Body of pancreas (tissue), 4 donors: ENCODE measurements at regions of chr1 and their contacts with region 1.

Region 1: GRCh38 chr1:183323849-183324683 is 94.1 kb downstream of the NMNAT2 start:
- DNase-seq: no peak
- ATAC-seq: no peak
- H3K4me3 ChIP-seq: no peak overlapping the region
- H3K27ac ChIP-seq: no peak overlapping the region
- H3K4me1 ChIP-seq: no peaks in the 10 kb centered on the region
- H3K27me3 ChIP-seq: no peaks in the 10 kb centered on the region
- CTCF ChIP-seq: no peak
- POLR2A ChIP-seq: no peak

Region 2: DNA sequence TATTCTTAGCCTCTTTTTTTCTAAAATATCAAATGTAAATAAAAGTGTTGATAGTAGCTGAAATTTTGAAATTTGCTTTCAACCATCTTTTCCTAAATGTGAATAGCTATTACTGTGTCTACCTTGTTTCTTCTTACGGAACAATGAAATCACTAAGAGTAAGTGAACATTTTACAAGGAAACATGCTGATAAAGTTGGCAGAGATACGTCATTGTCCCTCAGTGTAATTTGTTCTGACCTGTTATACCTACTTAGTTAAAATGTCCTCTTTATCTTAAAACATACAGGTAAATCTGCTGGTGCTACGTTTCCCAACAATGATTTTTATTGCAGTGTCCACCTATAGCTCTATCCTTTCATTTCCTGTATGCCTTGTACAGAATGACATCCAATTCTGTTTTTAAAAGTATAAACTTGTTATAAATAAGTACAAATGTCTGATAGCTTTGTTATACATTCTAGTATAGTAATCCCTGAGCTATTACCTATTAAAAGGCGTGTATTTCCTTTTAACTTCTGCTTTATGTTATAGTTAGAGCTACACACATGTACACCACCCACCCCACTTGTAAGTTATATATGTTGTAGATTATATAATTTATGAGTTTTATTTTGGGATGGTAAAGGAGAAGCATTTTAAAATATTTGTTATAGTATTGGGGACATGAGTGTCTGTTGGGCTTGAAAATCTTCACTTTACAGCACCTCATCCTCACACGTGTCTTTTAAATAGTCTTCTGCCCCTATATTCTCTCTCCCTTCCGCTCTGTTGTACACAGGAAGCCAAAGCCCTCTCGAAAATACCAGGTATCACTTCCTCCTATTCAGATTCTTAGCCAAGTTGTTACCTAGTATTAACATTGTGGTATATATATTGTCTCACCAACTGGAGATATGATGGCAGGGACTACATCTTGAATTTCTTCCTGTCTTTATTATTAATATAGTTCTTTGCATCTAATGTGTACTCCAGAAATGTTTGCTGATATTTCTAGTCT is 275.7 kb before region 1 on chr1:
- intact Hi-C with region 1: no loop called
- DNase-seq: no peak
- ATAC-seq: no peak
- H3K4me3 ChIP-seq: no peak overlapping the region
- H3K27ac ChIP-seq: no peak overlapping the region
- H3K4me1 ChIP-seq: peaks cover 22% of the 10 kb centered on the region
- H3K27me3 ChIP-seq: no peaks in the 10 kb centered on the region
- CTCF ChIP-seq: no peak
- POLR2A ChIP-seq: no peak

Region 3: GRCh38 chr1:183244466-183244865 is 79.6 kb before region 1 on chr1:
- intact Hi-C with region 1: no loop called
- DNase-seq: peak; percentile 51 to 63 (median 55)
- ATAC-seq: peak; percentile 46
- H3K4me3 ChIP-seq: no peak overlapping the region
- H3K27ac ChIP-seq: peak overlapping the region in 1 of 4 donors; percentile 22
- H3K4me1 ChIP-seq: no peaks in the 10 kb centered on the region
- H3K27me3 ChIP-seq: no peaks in the 10 kb centered on the region
- CTCF ChIP-seq: no peak
- POLR2A ChIP-seq: no peak

Region 4: GRCh38 chr1:183279835-183280234 is 44.2 kb before region 1 on chr1:
- intact Hi-C with region 1: loop called (anchors 5 kb)
- DNase-seq: peak in 1 of 4 donors; percentile 63
- ATAC-seq: no peak
- H3K4me3 ChIP-seq: no peak overlapping the region
- H3K27ac ChIP-seq: peak overlapping the region in 1 of 4 donors; percentile 39
- H3K4me1 ChIP-seq: peaks cover 21% of the 10 kb centered on the region
- H3K27me3 ChIP-seq: no peaks in the 10 kb centered on the region
- CTCF ChIP-seq: no peak
- POLR2A ChIP-seq: no peak

Region 5: GRCh38 chr1:183417772-183418491 is 93.9 kb after region 1 on chr1 and contains the start of gene NMNAT2:
- intact Hi-C with region 1: no loop called
- DNase-seq: peak in 3 of 4 donors; percentile 14 to 37 (median 18)
- ATAC-seq: no peak
- H3K4me3 ChIP-seq: no peak within 1 kb of the TSS
- H3K27ac ChIP-seq: no peak within 1 kb of the TSS
- H3K4me1 ChIP-seq: peaks cover 19% of the 10 kb centered on the region
- H3K27me3 ChIP-seq: peaks cover 5 to 21% of the 10 kb centered on the region in 2 donors
- CTCF ChIP-seq: no peak
- POLR2A ChIP-seq: no peak
- total RNA-seq, gene NMNAT2: 1.0 to 1.3 TPM